ENCODE measurements at regions of chr4 and their contacts with region 1.

Region 1: GRCh38 chr4:114077610-114078009 is 98.2 kb upstream of the ARSJ start:
- DNase-seq: peak in 1 of 2 experiments; percentile 9
- H3K4me3 ChIP-seq: no peak overlapping the region
- H3K27ac ChIP-seq: no peak overlapping the region
- H3K4me1 ChIP-seq: no peaks in the 10 kb centered on the region
- H3K27me3 ChIP-seq: no peaks in the 10 kb centered on the region
- CTCF ChIP-seq: no peak

Region 2: GRCh38 chr4:113781439-113782040 is 296.1 kb before region 1 on chr4:
- CTCF ChIA-PET with region 1: no interaction called
- POLR2A ChIA-PET with region 1: no interaction called
- intact Hi-C with region 1: loop called (anchors 10 kb)
- DNase-seq: no peak
- H3K4me3 ChIP-seq: no peak overlapping the region
- H3K27ac ChIP-seq: no peak overlapping the region
- H3K4me1 ChIP-seq: no peaks in the 10 kb centered on the region; the same call in 1 of the 2 replicates
- H3K27me3 ChIP-seq: no peaks in the 10 kb centered on the region
- CTCF ChIP-seq: peak; percentile 72

Region 3: GRCh38 chr4:113952452-113953029 is 125.1 kb before region 1 on chr4:
- CTCF ChIA-PET with region 1: no interaction called
- POLR2A ChIA-PET with region 1: no interaction called
- intact Hi-C with region 1: loop called (anchors 10 kb)
- DNase-seq: no peak
- H3K4me3 ChIP-seq: no peak overlapping the region
- H3K27ac ChIP-seq: no peak overlapping the region
- H3K4me1 ChIP-seq: no peaks in the 10 kb centered on the region
- H3K27me3 ChIP-seq: no peaks in the 10 kb centered on the region
- CTCF ChIP-seq: peak; percentile 57

Region 4: GRCh38 chr4:114052227-114052626 is 25.4 kb before region 1 on chr4:
- CTCF ChIA-PET with region 1: interaction called, 15 read pairs
- POLR2A ChIA-PET with region 1: no interaction called
- intact Hi-C with region 1: no loop called
- DNase-seq: no peak
- H3K4me3 ChIP-seq: no peak overlapping the region
- H3K27ac ChIP-seq: no peak overlapping the region
- H3K4me1 ChIP-seq: no peaks in the 10 kb centered on the region
- H3K27me3 ChIP-seq: no peaks in the 10 kb centered on the region
- CTCF ChIP-seq: no peak